ENCODE measurements at regions of chr7 and their contacts with region 1.

Region 1: GRCh38 chr7:108181073-108181985 is 51.2 kb upstream of the LAMB4 start:
- DNase-seq: no peak
- H3K4me3 ChIP-seq: no peak overlapping the region
- H3K27ac ChIP-seq: no peak overlapping the region
- H3K4me1 ChIP-seq: no peaks in the 10 kb centered on the region
- H3K27me3 ChIP-seq: no peaks in the 10 kb centered on the region
- CTCF ChIP-seq: peak; percentile 65 to 73 (median 71)
- EP300 ChIP-seq: no peak
- POLR2A ChIP-seq: no peak

Region 2: GRCh38 chr7:108497082-108497725 is 315.9 kb after region 1 on chr7:
- intact Hi-C with region 1: loop called (anchors 5 kb)
- DNase-seq: no peak
- H3K4me3 ChIP-seq: no peak overlapping the region
- H3K27ac ChIP-seq: no peak overlapping the region
- H3K4me1 ChIP-seq: no peaks in the 10 kb centered on the region
- H3K27me3 ChIP-seq: no peaks in the 10 kb centered on the region
- CTCF ChIP-seq: peak; percentile 69 to 84 (median 73)
- EP300 ChIP-seq: no peak
- POLR2A ChIP-seq: no peak

Measured in esophagus muscularis mucosa (tissue), 4 donors.